Cardiac septum (tissue), 1 donor: ENCODE measurements at regions of chr9 and their contacts with region 1.

Region 1: GRCh38 chr9:5832543-5833529 is at the start of gene ERMP1:
- DNase-seq: peak; percentile 93
- total RNA-seq, gene ERMP1: 16.8 TPM

Region 2: GRCh38 chr9:5628530-5629311 is 204.1 kb before region 1 on chr9 and contains the start of gene RIC1:
- intact Hi-C with region 1: loop called (anchors 5 kb)
- DNase-seq: peak; percentile 96
- total RNA-seq, gene RIC1: 9.3 TPM

Region 3: DNA sequence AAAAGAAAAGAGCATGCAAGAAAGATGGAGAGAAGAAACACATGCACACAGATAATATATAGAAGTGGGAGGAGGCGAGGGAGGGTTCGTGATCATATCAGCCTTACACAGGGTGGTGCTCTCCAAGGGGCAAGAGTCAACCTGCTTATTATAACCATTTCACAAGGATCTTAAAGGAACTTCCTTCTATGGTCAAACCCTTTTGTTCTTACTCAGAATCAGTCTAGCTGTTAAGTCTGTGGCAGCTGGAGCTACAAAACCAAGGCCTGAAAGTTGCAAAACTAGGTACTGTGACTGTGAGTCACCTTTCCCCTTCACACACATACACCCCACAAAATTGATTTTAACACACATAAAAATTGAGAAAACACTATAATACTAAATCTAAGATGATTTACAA is 18.6 kb after region 1 on chr9:
- intact Hi-C with region 1: no loop called
- DNase-seq: no peak

Region 4: DNA sequence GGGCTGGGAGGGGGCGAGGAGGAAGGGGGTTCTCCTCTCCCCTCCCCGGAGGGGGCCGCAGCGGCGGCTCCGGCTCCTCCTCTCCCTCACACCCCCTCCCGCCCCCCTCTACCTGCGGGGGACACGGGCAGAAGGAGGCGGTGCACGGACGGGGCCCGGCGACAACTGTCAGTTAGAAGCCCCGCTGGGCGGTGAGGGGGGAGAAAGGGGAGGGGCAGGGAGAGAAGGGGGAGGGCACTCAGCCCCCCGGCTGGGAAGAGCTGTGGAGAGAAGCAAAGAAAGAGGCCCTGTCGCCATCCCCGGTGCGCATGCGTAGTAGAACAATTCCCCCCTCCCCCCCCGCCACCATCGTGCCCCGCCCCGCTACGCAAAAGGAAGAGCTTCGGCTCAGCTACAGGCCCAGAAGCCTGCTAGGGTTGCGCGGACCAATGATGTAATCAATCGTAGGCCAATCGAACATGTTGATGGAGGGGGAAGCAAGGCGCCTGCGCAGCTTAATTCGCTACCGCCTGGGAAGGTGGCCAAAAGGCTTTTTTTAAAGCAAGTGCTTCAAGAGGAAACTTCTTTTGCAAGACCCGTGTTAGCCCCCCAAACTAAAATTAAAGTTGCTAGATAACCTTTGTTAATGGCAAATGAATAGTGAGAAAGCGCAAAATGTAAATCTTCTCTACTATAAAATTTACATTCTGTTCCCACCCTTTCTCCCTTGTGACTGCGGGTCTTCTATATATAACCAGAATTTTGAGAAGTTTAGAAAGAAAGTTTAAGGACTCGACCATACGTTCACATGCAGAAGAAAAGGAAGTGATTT is 175.5 kb after region 1 on chr9:
- intact Hi-C with region 1: loop called (anchors 10 kb)
- DNase-seq: peak; percentile 98